Panc1 (cell line): ENCODE measurements at regions of chr11 and their contacts with region 1.

Region 1: GRCh38 chr11:90364527-90364926 is 141.7 kb upstream of the CHORDC1 start:
- DNase-seq: no peak
- ATAC-seq: no peak
- H3K4me3 ChIP-seq: no peak overlapping the region
- H3K27ac ChIP-seq: no peak overlapping the region
- H3K4me1 ChIP-seq: no peaks in the 10 kb centered on the region
- H3K27me3 ChIP-seq: no peaks in the 10 kb centered on the region
- CTCF ChIP-seq: no peak

Region 2: GRCh38 chr11:90343673-90344072 is 20.9 kb before region 1 on chr11:
- CTCF ChIA-PET with region 1: no interaction called
- POLR2A ChIA-PET with region 1: no interaction called
- in situ Hi-C with region 1: no loop called
- intact Hi-C with region 1: no loop called
- DNase-seq: no peak
- ATAC-seq: no peak
- H3K4me3 ChIP-seq: no peak overlapping the region
- H3K27ac ChIP-seq: no peak overlapping the region
- H3K4me1 ChIP-seq: no peaks in the 10 kb centered on the region
- H3K27me3 ChIP-seq: no peaks in the 10 kb centered on the region
- CTCF ChIP-seq: no peak

Region 3: DNA sequence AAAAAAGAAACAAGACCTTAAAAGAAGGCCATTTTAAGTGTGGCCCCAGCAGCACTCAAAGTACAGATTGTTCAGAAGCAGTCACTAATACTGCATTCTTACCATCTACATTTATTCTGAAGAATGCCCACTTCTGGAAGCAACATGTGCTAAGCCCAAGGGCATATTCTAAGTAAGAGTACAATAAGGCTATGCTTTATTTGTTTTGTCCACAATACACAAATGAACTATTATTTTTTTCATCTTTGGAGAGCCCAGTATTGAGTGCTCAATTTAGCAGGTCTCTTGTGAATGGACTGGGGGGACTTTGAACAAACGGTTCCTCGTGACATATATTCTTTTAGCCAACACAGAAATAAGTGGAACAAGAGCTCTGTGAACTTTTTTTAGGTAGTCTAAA is 49.7 kb after region 1 on chr11:
- CTCF ChIA-PET with region 1: no interaction called
- POLR2A ChIA-PET with region 1: no interaction called
- in situ Hi-C with region 1: no loop called
- intact Hi-C with region 1: loop called (anchors 10 kb)
- DNase-seq: no peak
- ATAC-seq: no peak
- H3K4me3 ChIP-seq: no peak overlapping the region
- H3K27ac ChIP-seq: no peak overlapping the region
- H3K4me1 ChIP-seq: no peaks in the 10 kb centered on the region
- H3K27me3 ChIP-seq: no peaks in the 10 kb centered on the region
- CTCF ChIP-seq: no peak